ENCODE measurements at regions of chr1 and their contacts with region 1.

Region 1: GRCh38 chr1:19811206-19811851 is 3.8 kb downstream of the RNF186 start:
- DNase-seq: peak; percentile 50
- ATAC-seq: peak; percentile 59
- H3K4me3 ChIP-seq: no peak overlapping the region
- H3K27ac ChIP-seq: no peak overlapping the region
- H3K4me1 ChIP-seq: peaks cover 23% of the 10 kb centered on the region
- H3K27me3 ChIP-seq: peaks cover 0 to 11% of the 10 kb centered on the region in 2 experiments; a peak in 3 of 5 replicates
- CTCF ChIP-seq: peak; percentile 78
- EP300 ChIP-seq: no peak
- POLR2A ChIP-seq: no peak
- RAD21 ChIP-seq: peak; percentile 45; the same call in 1 of the 2 replicates

Region 2: GRCh38 chr1:19704247-19705113 is 106.8 kb before region 1 on chr1:
- CTCF ChIA-PET with region 1: no interaction called
- POLR2A ChIA-PET with region 1: no interaction called
- in situ Hi-C with region 1: no loop called
- intact Hi-C with region 1: no loop called
- DNase-seq: peak; percentile 53
- ATAC-seq: peak; percentile 98
- H3K4me3 ChIP-seq: no peak overlapping the region
- H3K27ac ChIP-seq: no peak overlapping the region
- H3K4me1 ChIP-seq: peaks cover 9% of the 10 kb centered on the region
- H3K27me3 ChIP-seq: no peaks in the 10 kb centered on the region
- CTCF ChIP-seq: peak; percentile 89
- EP300 ChIP-seq: no peak
- POLR2A ChIP-seq: no peak
- RAD21 ChIP-seq: peak; percentile 62

Region 3: GRCh38 chr1:19762175-19762779 is 49.1 kb before region 1 on chr1:
- CTCF ChIA-PET with region 1: interaction called, 14 read pairs
- POLR2A ChIA-PET with region 1: interaction called, 3 read pairs
- in situ Hi-C with region 1: loop called (anchors 5 kb)
- intact Hi-C with region 1: loop called (anchors 1 kb)
- DNase-seq: peak; percentile 6
- ATAC-seq: peak; percentile 81
- H3K4me3 ChIP-seq: no peak overlapping the region
- H3K27ac ChIP-seq: no peak overlapping the region
- H3K4me1 ChIP-seq: peaks cover 11% of the 10 kb centered on the region
- H3K27me3 ChIP-seq: no peaks in the 10 kb centered on the region; a peak in 1 of 5 replicates
- CTCF ChIP-seq: peak; percentile 80
- EP300 ChIP-seq: no peak
- POLR2A ChIP-seq: no peak
- RAD21 ChIP-seq: peak; percentile 61; the same call in 1 of the 2 replicates

Region 4: DNA sequence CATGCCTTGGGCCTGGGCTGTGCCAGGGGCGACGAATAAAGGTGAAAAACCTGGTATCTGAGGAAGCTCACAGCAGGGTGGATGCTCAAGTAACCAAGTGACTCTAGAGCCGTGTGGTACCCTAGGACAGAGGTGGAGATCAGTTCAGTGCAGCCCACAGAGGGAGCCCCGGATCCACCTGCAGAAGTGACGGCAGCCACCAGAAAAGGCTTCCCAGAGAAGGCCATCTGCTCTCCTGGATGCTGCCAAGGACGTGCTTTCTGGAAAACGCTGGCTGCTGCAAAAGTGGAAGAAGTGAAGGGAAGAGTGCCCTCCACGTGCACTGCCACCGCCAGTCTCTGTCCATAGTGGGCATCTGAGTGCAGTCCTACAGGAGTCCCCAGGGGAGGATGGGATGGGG is 39.3 kb before region 1 on chr1:
- CTCF ChIA-PET with region 1: no interaction called
- POLR2A ChIA-PET with region 1: no interaction called
- in situ Hi-C with region 1: no loop called
- intact Hi-C with region 1: loop called (anchors 1 kb)
- DNase-seq: no peak
- ATAC-seq: peak; percentile 46
- H3K4me3 ChIP-seq: no peak overlapping the region
- H3K27ac ChIP-seq: no peak overlapping the region
- H3K4me1 ChIP-seq: no peaks in the 10 kb centered on the region
- H3K27me3 ChIP-seq: no peaks in the 10 kb centered on the region
- CTCF ChIP-seq: peak; percentile 49
- EP300 ChIP-seq: no peak
- POLR2A ChIP-seq: no peak
- RAD21 ChIP-seq: no peak

Region 5: GRCh38 chr1:19882111-19883071 is 71.1 kb after region 1 on chr1 and contains the start of gene OTUD3:
- CTCF ChIA-PET with region 1: no interaction called
- POLR2A ChIA-PET with region 1: interaction called, 3 read pairs
- in situ Hi-C with region 1: no loop called
- intact Hi-C with region 1: loop called (anchors 10 kb)
- DNase-seq: peak; percentile 97
- ATAC-seq: peak; percentile 93
- H3K4me3 ChIP-seq: peak within 1 kb of the TSS; percentile 80 to 82 (median 81)
- H3K27ac ChIP-seq: peak within 1 kb of the TSS; percentile 82
- H3K4me1 ChIP-seq: peaks cover 49% of the 10 kb centered on the region
- H3K27me3 ChIP-seq: no peaks in the 10 kb centered on the region; a peak in 1 of 5 replicates
- CTCF ChIP-seq: peak; percentile 93
- EP300 ChIP-seq: no peak; a peak in 1 of 4 replicates
- POLR2A ChIP-seq: peak; percentile 68 to 87
- RAD21 ChIP-seq: peak; percentile 56; the same call in 1 of the 2 replicates
- total RNA-seq, gene OTUD3: 5.2 and 7.5 TPM in 2 replicates